ENCODE measurements at regions of chr15 and their contacts with region 1.

Region 1: DNA sequence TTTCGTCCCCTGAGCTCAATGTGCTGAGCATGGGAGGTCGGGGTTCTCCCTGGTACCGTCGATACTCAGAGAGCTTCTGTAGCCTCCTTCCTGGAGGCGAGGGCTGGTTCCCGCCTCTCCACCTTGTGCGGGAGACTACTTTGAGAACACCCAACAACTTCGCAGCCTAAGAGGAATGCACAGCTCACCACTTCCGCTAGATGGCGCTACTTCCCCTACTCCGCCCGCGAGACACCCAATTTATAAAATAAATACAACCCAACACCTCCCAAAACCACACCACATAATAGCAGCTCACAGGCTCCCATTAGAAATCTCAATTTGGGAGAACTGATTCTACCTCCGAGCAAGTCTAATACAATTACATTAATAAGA is 1.2 kb downstream of the RGMA start:
- DNase-seq: peak; percentile 83
- H3K4me3 ChIP-seq: peak overlapping the region; percentile 47
- H3K27ac ChIP-seq: no peak overlapping the region
- H3K4me1 ChIP-seq: peaks cover 10% of the 10 kb centered on the region
- H3K27me3 ChIP-seq: peaks cover 57% of the 10 kb centered on the region
- CTCF ChIP-seq: peak; percentile 92

Region 2: GRCh38 chr15:92917606-92918407 is 170.0 kb before region 1 on chr15:
- CTCF ChIA-PET with region 1: no interaction called
- POLR2A ChIA-PET with region 1: no interaction called
- intact Hi-C with region 1: no loop called
- DNase-seq: peak; percentile 96
- H3K4me3 ChIP-seq: no peak overlapping the region
- H3K27ac ChIP-seq: peak overlapping the region; percentile 79
- H3K4me1 ChIP-seq: peaks cover 34% of the 10 kb centered on the region
- H3K27me3 ChIP-seq: no peaks in the 10 kb centered on the region
- CTCF ChIP-seq: peak; percentile 97

Region 3: DNA sequence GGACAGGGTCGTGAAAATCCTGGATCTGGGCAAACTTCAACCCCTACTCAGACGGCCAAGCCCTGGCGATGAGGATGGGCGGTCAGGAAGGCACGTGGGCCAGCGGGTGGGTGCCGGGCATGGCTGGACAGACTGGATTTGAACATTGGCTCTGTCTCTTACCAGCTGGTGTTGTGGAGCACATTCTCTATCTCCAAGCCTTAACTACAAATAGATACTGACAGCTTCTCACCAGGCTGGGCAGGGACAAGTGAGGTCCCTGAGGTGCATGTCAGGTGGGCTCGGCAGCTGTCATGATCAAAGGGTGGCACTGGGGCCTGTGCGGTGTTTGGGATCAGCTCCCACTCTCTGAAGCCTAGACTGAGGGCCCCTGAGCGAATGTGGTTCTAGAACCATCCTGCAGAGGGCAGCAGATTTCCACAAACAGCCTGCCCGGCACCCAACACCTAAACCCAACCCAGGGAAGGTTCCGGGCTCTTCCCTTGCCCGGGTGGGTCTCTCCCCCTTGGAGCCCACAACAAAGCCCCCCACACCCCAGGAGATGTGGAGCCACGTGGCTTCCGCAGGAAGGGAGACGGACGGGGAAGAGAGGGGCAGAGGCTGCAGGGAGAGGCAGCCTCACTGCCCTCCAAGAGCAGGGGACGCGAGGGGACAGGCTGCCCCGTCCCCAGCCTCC is 57.2 kb before region 1 on chr15:
- CTCF ChIA-PET with region 1: interaction called, 8 read pairs
- POLR2A ChIA-PET with region 1: no interaction called
- intact Hi-C with region 1: loop called (anchors 5 kb)
- DNase-seq: peak; percentile 79
- H3K4me3 ChIP-seq: no peak overlapping the region
- H3K27ac ChIP-seq: no peak overlapping the region
- H3K4me1 ChIP-seq: peaks cover 37% of the 10 kb centered on the region
- H3K27me3 ChIP-seq: no peaks in the 10 kb centered on the region
- CTCF ChIP-seq: peak; percentile 90

Region 4: DNA sequence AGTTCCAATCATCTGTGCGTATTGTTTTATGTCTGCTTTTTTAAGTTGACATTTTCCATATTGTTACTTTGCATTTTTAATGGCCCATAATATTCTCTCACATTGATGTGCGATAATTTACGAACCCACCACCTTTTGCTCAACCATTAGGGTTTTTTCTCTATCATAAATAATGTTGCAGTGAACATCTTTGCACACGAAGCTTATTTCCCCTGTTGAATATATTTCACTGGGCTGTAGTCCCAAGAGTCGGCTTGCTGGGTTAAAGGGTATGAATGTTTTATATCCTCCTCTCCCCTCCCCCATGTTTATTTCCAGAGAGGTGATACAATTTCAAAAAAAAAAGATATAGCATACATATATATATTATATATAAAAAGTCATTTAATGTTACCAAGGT is 273.9 kb after region 1 on chr15:
- CTCF ChIA-PET with region 1: interaction called, 21 read pairs
- POLR2A ChIA-PET with region 1: no interaction called
- intact Hi-C with region 1: no loop called
- DNase-seq: no peak
- H3K4me3 ChIP-seq: no peak overlapping the region
- H3K27ac ChIP-seq: no peak overlapping the region
- H3K4me1 ChIP-seq: no peaks in the 10 kb centered on the region
- H3K27me3 ChIP-seq: no peaks in the 10 kb centered on the region
- CTCF ChIP-seq: no peak

Region 5: GRCh38 chr15:93974804-93975481 is 887.1 kb after region 1 on chr15:
- CTCF ChIA-PET with region 1: interaction called, 22 read pairs
- POLR2A ChIA-PET with region 1: no interaction called
- intact Hi-C with region 1: loop called (anchors 2 kb)
- DNase-seq: peak; percentile 58
- H3K4me3 ChIP-seq: no peak overlapping the region
- H3K27ac ChIP-seq: no peak overlapping the region
- H3K4me1 ChIP-seq: no peaks in the 10 kb centered on the region
- H3K27me3 ChIP-seq: no peaks in the 10 kb centered on the region
- CTCF ChIP-seq: peak; percentile 68

Region 6: GRCh38 chr15:93997084-93997918 is 909.5 kb after region 1 on chr15:
- CTCF ChIA-PET with region 1: no interaction called
- POLR2A ChIA-PET with region 1: no interaction called
- intact Hi-C with region 1: loop called (anchors 5 kb)
- DNase-seq: peak; percentile 48
- H3K4me3 ChIP-seq: no peak overlapping the region
- H3K27ac ChIP-seq: no peak overlapping the region
- H3K4me1 ChIP-seq: no peaks in the 10 kb centered on the region
- H3K27me3 ChIP-seq: no peaks in the 10 kb centered on the region
- CTCF ChIP-seq: peak; percentile 84